Activated T-helper 2 cell treated with anti-CD3 and anti-CD28 coated beads, Interferon-gamma antibody, Interleukin-2, Interleukin-4, amounts not matched to agents 10 μg/mL and 5 μg/mL and 100 μg/mL, durations not matched to agents 14 hours and 24 hours and 36 hours (primary cell): ENCODE measurements at regions of chr2 and their contacts with region 1.

Region 1: DNA sequence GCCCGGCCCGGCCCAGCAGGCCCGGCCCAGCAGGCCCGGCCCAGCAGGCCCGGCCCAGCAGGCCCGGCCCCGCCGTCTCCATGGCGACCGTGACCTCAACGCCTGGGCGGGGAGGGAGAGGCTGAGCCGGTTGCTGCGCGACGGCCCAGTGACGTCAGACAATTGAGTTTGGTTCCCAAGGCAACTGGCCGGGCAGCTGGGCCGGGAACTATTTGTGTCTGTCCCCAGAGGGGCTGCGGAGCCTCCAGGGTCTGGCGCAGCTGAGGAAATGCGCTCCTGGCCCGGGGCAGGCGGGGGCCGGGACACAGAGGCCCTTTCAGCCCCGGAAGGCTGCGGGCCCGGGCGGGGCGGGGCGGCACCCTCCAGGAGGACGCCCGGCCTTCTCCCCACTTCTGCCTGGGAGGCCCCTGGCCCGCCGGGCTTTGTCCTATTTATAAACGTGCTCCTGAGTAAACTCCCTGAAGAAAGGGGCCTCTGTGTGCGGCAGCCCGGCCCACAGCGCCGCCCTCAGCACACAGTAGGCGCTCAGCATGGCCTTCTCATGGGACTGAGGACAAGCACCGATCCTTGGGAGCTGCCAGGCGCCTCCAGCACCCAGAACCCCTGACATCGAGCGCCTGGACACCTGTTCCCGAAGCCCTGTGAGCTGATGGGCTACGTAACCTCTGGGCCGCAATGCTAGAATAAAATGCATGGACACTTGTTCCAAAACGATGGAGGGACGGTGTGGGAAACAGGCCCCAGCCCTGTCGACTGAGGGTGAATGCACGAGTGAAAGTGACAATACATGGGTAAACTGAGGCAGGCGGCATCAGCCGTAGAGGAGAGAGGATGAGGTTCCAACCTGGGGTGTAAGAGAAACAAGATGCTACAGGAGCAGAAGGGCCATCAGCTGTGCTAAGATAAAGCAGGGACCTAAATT is 12.3 kb downstream of the TEX44 start:
- DNase-seq: peak; percentile 93
- H3K4me3 Mint-ChIP-seq: peak overlapping the region; percentile 62
- H3K27ac Mint-ChIP-seq: peak overlapping the region; percentile 66
- H3K4me1 Mint-ChIP-seq: peaks cover 3% of the 10 kb centered on the region
- H3K27me3 Mint-ChIP-seq: peaks cover 3% of the 10 kb centered on the region

Region 2: DNA sequence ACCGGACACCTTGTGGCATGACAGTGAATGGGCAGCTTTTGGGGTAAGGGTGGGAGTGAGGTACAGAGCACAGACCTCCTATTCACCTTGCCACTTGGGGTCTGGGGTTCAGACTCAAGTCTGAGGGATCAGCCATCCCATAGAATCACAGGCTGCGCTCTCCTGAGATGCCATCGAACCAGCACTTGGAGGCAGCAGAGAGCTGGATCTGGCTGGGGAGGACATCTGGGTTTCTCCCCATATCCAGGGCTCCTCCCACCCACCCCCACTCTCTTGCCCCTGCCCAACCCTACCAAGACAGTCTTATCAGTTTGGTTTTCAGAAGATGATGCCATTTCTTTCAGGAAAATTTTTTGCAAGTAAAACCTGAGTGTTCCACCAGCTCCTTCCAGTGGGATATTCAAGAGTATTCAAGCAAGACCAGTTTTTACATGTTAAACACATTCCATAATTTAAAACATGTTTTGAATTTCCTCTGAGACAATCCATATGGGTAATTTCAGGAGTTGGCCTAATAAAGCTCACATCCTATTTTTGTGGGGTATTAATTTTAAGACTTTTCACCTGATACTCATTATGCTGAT is 41.5 kb before region 1 on chr2:
- intact Hi-C with region 1: loop called (anchors 1 kb)
- DNase-seq: peak; percentile 22
- H3K4me3 Mint-ChIP-seq: no peak overlapping the region
- H3K27ac Mint-ChIP-seq: no peak overlapping the region
- H3K4me1 Mint-ChIP-seq: peaks cover 2% of the 10 kb centered on the region
- H3K27me3 Mint-ChIP-seq: peaks cover 4% of the 10 kb centered on the region

Region 3: GRCh38 chr2:231640641-231641135 is 35.7 kb after region 1 on chr2:
- intact Hi-C with region 1: no loop called
- DNase-seq: no peak
- H3K4me3 Mint-ChIP-seq: no peak overlapping the region
- H3K27ac Mint-ChIP-seq: no peak overlapping the region
- H3K4me1 Mint-ChIP-seq: peaks cover 13% of the 10 kb centered on the region
- H3K27me3 Mint-ChIP-seq: no peaks in the 10 kb centered on the region